Pancreas (tissue), 10 donors: ENCODE measurements at regions of chr13 and their contacts with region 1.

Region 1: GRCh38 chr13:24220086-24220703 is 59.7 kb downstream of the SPATA13 start:
- DNase-seq: peak in 3 of 6 donors; percentile 63 to 73 (median 68)
- ATAC-seq: peak; percentile 58 to 81 (median 74)
- H3K4me3 ChIP-seq: no peak overlapping the region
- H3K27ac ChIP-seq: peak overlapping the region; percentile 60 to 77 (median 69)
- H3K4me1 ChIP-seq: peaks cover 57 to 63% (median 61%) of the 10 kb centered on the region in 3 donors
- H3K27me3 ChIP-seq: no peaks in the 10 kb centered on the region
- CTCF ChIP-seq: peak; percentile 56 to 71 (median 62)

Region 2: GRCh38 chr13:23630349-23631093 is 589.7 kb before region 1 on chr13:
- intact Hi-C with region 1: no loop called
- DNase-seq: no peak
- ATAC-seq: peak in 3 of 4 donors; percentile 3 to 71 (median 28)
- H3K4me3 ChIP-seq: no peak overlapping the region
- H3K27ac ChIP-seq: peak overlapping the region in 2 of 4 donors; percentile 18 to 31
- H3K4me1 ChIP-seq: peaks cover 6 to 29% (median 19%) of the 10 kb centered on the region in 3 donors
- H3K27me3 ChIP-seq: no peaks in the 10 kb centered on the region
- CTCF ChIP-seq: no peak

Region 3: DNA sequence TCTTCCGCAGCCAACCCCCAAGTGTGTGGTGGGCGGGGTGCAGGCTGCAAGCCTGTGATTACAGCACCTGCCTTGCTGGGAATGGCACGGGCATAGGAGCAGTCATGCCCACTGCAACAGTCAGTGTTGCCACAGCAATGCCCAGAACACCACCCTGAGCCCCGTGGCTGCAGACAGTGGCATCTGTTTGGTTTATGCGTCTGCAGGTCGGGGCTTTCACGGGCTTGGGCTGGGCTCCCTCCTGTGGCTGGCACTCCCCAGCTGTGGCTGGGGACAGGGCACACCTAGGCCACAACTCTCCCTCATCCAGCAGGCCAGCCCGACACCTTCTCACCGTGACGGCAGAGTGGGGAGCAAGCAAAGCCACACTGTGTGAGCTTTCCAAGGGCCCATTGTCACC is 207.5 kb before region 1 on chr13:
- intact Hi-C with region 1: loop called in 1 of 3 experiments (anchors 10 kb)
- DNase-seq: no peak
- ATAC-seq: peak in 2 of 4 donors; percentile 16 to 44
- H3K4me3 ChIP-seq: no peak overlapping the region
- H3K27ac ChIP-seq: no peak overlapping the region
- H3K4me1 ChIP-seq: no peaks in the 10 kb centered on the region
- H3K27me3 ChIP-seq: no peaks in the 10 kb centered on the region
- CTCF ChIP-seq: no peak

Region 4: DNA sequence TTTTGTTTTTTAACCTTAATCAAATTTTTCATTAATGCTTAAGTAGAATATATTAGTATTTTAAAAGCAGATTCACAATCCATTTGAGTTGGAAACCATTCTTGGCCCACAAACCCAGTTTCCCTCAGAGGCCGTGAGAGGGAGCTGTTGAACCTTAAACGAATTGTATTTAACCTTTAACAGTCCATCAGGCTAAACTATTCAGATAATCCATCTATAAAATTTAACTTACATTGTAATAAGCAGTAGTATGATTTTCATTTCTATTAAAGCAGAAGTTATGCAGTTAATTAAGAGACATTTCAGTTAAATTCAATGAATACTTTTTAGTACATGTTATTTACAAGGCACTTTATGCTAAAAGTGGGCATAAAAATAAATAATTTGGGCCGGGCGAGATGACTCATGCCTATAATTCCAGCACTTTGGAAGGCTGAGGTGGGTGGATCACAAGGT is 199.8 kb before region 1 on chr13:
- intact Hi-C with region 1: loop called in 2 of 3 experiments (anchors 5 to 10 kb)
- DNase-seq: peak in 3 of 6 donors; percentile 38 to 69 (median 50)
- ATAC-seq: peak; percentile 75 to 95 (median 94)
- H3K4me3 ChIP-seq: no peak overlapping the region
- H3K27ac ChIP-seq: no peak overlapping the region
- H3K4me1 ChIP-seq: no peaks in the 10 kb centered on the region
- H3K27me3 ChIP-seq: no peaks in the 10 kb centered on the region
- CTCF ChIP-seq: peak; percentile 13 to 70 (median 52)

Region 5: GRCh38 chr13:24039621-24040475 is 180.3 kb before region 1 on chr13:
- intact Hi-C with region 1: loop called in 1 of 3 experiments (anchors 10 kb)
- DNase-seq: no peak
- ATAC-seq: no peak
- H3K4me3 ChIP-seq: no peak overlapping the region
- H3K27ac ChIP-seq: peak overlapping the region in 3 of 4 donors; percentile 39 to 75 (median 62)
- H3K4me1 ChIP-seq: peaks cover under 1 to 16% (median 12%) of the 10 kb centered on the region in 3 donors
- H3K27me3 ChIP-seq: no peaks in the 10 kb centered on the region
- CTCF ChIP-seq: no peak

Region 6: DNA sequence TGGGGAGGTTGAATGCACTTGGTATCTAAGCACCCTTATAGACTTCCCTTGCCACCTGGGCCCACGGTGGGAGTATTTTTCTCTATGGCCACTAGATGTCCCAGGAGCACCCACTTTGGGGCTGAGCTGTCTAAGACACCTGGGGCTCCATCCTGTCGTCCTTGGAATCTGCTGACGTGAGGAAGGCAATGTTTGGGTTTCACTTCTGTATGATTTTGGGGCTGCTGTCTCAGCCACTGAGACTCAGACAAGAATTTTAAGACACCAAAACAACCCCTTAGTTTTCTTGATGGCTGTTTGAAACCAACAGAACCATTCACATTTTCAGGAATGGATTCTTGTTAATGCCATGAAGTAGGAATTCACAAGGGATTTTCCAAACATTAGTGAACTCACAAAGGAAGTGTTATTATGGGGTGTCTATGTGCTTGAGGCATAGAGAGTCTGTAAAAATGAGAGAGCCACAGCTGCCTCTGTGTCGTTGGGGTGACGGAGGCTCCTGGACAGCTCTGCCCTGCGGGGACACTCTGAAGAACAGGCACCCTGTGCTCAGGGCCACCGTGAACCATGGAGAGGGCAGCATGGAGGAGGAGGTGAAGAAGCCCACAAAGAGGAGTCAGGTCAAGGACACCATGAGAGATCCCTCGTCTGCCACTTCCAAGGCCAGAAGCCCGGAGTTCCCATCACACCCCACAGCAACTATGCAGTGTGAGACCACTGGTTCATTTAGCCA is 166.5 kb before region 1 on chr13:
- intact Hi-C with region 1: loop called (anchors 10 kb)
- DNase-seq: peak in 5 of 6 donors; percentile 68 to 80 (median 73)
- ATAC-seq: peak; percentile 93 to 97 (median 96)
- H3K4me3 ChIP-seq: no peak overlapping the region
- H3K27ac ChIP-seq: peak overlapping the region in 3 of 4 donors; percentile 29 to 62 (median 35)
- H3K4me1 ChIP-seq: peaks cover 0 to 14% (median 9%) of the 10 kb centered on the region in 3 donors
- H3K27me3 ChIP-seq: no peaks in the 10 kb centered on the region
- CTCF ChIP-seq: peak; percentile 54 to 70 (median 66)

Region 7: DNA sequence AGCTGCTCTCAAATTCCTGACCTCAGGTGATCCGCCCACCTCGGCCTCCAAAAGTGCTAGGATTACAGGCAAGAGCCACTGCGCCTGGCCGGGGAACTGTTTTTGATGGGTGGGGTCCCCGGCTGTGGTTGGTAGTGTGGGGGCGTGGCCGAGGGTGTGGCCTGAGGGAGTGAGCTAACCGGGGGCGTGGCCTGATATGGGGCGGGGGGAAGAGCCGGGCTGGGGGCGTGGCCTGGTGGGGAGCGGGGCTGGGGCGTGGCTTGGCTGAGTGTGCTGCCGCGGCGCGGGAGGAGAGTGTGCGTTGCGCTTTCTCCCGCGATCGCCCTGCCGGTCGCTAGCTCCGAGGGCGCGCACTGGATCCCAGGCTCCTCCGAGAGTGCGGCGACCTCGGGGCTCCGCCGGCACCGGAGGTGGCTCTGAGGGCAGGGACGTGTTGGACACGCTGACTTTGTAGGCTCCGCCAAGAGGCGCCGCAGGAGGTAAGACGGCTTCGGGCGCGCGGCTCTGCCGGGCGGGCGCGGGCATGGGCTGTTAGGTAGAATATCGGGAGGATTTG is 59.7 kb before region 1 on chr13 and contains the start of gene SPATA13:
- intact Hi-C with region 1: loop called in 2 of 3 experiments (anchors 10 kb)
- DNase-seq: peak; percentile 94 to 99 (median 98)
- ATAC-seq: peak; percentile 81 to 92 (median 90)
- H3K4me3 ChIP-seq: peak within 1 kb of the TSS; percentile 84 to 100 (median 86)
- H3K27ac ChIP-seq: peak within 1 kb of the TSS; percentile 96 to 99 (median 98)
- H3K4me1 ChIP-seq: peaks cover 19 to 29% (median 21%) of the 10 kb centered on the region in 3 donors
- H3K27me3 ChIP-seq: no peaks in the 10 kb centered on the region
- CTCF ChIP-seq: no peak
- total RNA-seq, gene SPATA13: 38.1 to 65.7 (median 53.9) TPM

Region 8: GRCh38 chr13:24183741-24184182 is 36.4 kb before region 1 on chr13:
- intact Hi-C with region 1: loop called in 1 of 3 experiments (anchors 5 kb)
- DNase-seq: peak; percentile 62 to 89 (median 78)
- ATAC-seq: peak; percentile 70 to 82 (median 76)
- H3K4me3 ChIP-seq: peak overlapping the region in 2 of 4 donors; percentile 17 to 22
- H3K27ac ChIP-seq: peak overlapping the region; percentile 88 to 99 (median 93)
- H3K4me1 ChIP-seq: peaks cover 47 to 67% (median 62%) of the 10 kb centered on the region in 3 donors
- H3K27me3 ChIP-seq: no peaks in the 10 kb centered on the region
- CTCF ChIP-seq: no peak

Region 9: DNA sequence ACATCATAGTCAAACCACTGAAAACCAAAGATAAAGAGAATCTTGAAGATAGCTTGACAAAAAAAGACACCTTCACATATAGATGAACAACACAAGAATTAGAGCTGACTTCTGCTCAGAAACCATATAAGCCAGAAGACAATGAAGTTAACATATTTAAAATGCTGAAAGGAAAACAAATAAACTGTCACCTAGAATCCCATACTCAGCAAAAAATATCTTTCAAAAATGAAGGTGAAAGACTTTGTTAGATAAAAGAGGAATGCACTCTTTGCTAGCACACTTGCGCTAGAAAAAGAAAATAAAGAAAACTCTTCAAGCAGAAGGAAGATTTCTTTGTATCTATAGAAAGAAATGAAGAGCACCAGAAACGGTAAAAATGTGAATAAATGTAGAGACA is 242.9 kb after region 1 on chr13:
- intact Hi-C with region 1: no loop called
- DNase-seq: no peak
- ATAC-seq: no peak
- H3K4me3 ChIP-seq: no peak overlapping the region
- H3K27ac ChIP-seq: no peak overlapping the region
- H3K4me1 ChIP-seq: no peaks in the 10 kb centered on the region
- H3K27me3 ChIP-seq: no peaks in the 10 kb centered on the region
- CTCF ChIP-seq: no peak

Region 10: GRCh38 chr13:24693862-24694471 is 473.8 kb after region 1 on chr13:
- intact Hi-C with region 1: no loop called
- DNase-seq: peak in 1 of 6 donors; percentile 31
- ATAC-seq: peak; percentile 67 to 87 (median 74)
- H3K4me3 ChIP-seq: no peak overlapping the region
- H3K27ac ChIP-seq: no peak overlapping the region
- H3K4me1 ChIP-seq: no peaks in the 10 kb centered on the region
- H3K27me3 ChIP-seq: peaks cover 0 to 2% (median 0%) of the 10 kb centered on the region in 4 donors
- CTCF ChIP-seq: peak; percentile 19 to 38 (median 32)